T-cell (primary cell): ENCODE measurements at regions of chr11 and their contacts with region 1.

Region 1: GRCh38 chr11:35138943-35139721 is at the start of gene CD44:
- DNase-seq: peak; percentile 53 to 88 (median 76)
- ATAC-seq: peak; percentile 78 to 88 (median 86)
- H3K4me3 ChIP-seq: peak within 1 kb of the TSS; percentile 85 to 99
- H3K4me3 Mint-ChIP-seq: peak within 1 kb of the TSS; percentile 91 to 98 (median 98)
- H3K27ac ChIP-seq: peak within 1 kb of the TSS; percentile 91
- H3K27ac Mint-ChIP-seq: peak within 1 kb of the TSS; percentile 97 to 98
- H3K4me1 ChIP-seq: peaks cover 30 to 38% of the 10 kb centered on the region in 2 experiments
- H3K4me1 Mint-ChIP-seq: peaks cover 48 to 63% (median 52%) of the 10 kb centered on the region in 3 donors
- H3K27me3 ChIP-seq: no peaks in the 10 kb centered on the region
- H3K27me3 Mint-ChIP-seq: no peaks in the 10 kb centered on the region
- total RNA-seq, gene CD44: 732 to 1,108 (median 781) TPM

Region 2: DNA sequence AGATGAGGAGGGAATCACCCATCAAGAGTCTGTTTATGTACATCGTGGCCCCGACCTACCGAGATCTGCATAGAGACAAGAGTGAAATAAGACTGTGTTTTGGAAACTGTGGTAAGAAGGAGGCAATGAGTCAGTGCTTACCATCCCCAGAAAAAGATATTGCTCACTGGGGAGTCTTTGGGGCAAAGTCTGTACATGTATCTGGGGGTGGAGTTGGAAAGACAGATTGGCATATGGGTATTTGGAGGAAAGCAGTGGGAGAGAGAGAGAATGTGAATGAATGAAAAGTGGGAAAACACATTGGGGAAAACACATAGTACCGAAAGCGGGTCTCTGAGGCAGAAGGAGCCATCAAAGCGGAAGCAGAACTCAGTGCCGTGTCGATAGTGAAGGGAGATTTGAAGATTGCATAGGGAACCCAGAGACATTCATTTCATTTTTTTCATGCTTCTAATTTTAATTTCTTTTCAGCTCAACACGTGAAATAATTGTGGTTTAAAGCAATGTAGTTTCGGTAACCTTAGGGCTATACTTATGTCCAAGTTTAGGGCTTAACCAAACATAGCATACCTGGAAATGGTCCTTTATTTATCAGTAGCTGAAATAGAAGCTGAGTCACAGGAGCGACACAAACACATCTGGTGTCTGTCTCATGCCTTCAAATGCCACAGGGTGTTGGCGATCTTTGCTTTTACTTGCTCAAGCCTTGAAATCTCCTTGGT is 98.8 kb before region 1 on chr11:
- CTCF ChIA-PET with region 1: no interaction called
- POLR2A ChIA-PET with region 1: interaction called in 1 of 2 experiments, 31 read pairs
- DNase-seq: peak in 33 of 35 experiments; percentile 36 to 85 (median 50)
- ATAC-seq: peak; percentile 86 to 89 (median 88)
- H3K4me3 ChIP-seq: peak overlapping the region; percentile 51 to 53
- H3K4me3 Mint-ChIP-seq: peak overlapping the region; percentile 78 to 86 (median 80)
- H3K27ac ChIP-seq: peak overlapping the region; percentile 97
- H3K27ac Mint-ChIP-seq: peak overlapping the region; percentile 95 to 99
- H3K4me1 ChIP-seq: peaks cover 27 to 58% of the 10 kb centered on the region in 2 experiments
- H3K4me1 Mint-ChIP-seq: peaks cover 54 to 82% (median 69%) of the 10 kb centered on the region in 3 donors
- H3K27me3 ChIP-seq: no peaks in the 10 kb centered on the region
- H3K27me3 Mint-ChIP-seq: no peaks in the 10 kb centered on the region

Region 3: GRCh38 chr11:35047179-35047578 is 92.0 kb before region 1 on chr11:
- CTCF ChIA-PET with region 1: interaction called, 4 read pairs
- POLR2A ChIA-PET with region 1: interaction called, 3 to 32 read pairs
- DNase-seq: peak in 34 of 35 experiments; percentile 29 to 86 (median 58)
- ATAC-seq: peak; percentile 67 to 72 (median 70)
- H3K4me3 ChIP-seq: no peak overlapping the region
- H3K4me3 Mint-ChIP-seq: peak overlapping the region; percentile 1 to 77 (median 42)
- H3K27ac ChIP-seq: peak overlapping the region; percentile 98
- H3K27ac Mint-ChIP-seq: peak overlapping the region; percentile 93 to 95
- H3K4me1 ChIP-seq: peaks cover 59 to 85% of the 10 kb centered on the region in 2 experiments
- H3K4me1 Mint-ChIP-seq: peaks cover 95 to 97% (median 97%) of the 10 kb centered on the region in 3 donors
- H3K27me3 ChIP-seq: no peaks in the 10 kb centered on the region
- H3K27me3 Mint-ChIP-seq: no peaks in the 10 kb centered on the region

Region 4: GRCh38 chr11:35151241-35151640 is 12.1 kb after region 1 on chr11:
- CTCF ChIA-PET with region 1: interaction called in 1 of 2 experiments, 3 read pairs
- POLR2A ChIA-PET with region 1: interaction called, 4 to 13 read pairs
- DNase-seq: no peak
- ATAC-seq: no peak
- H3K4me3 ChIP-seq: no peak overlapping the region
- H3K4me3 Mint-ChIP-seq: peak overlapping the region; percentile 11 to 91 (median 53)
- H3K27ac ChIP-seq: peak overlapping the region; percentile 57
- H3K27ac Mint-ChIP-seq: peak overlapping the region; percentile 88 to 89
- H3K4me1 ChIP-seq: peaks cover 72 to 88% of the 10 kb centered on the region in 2 experiments
- H3K4me1 Mint-ChIP-seq: peaks cover 99 to 100% (median 100%) of the 10 kb centered on the region in 3 donors
- H3K27me3 ChIP-seq: no peaks in the 10 kb centered on the region
- H3K27me3 Mint-ChIP-seq: no peaks in the 10 kb centered on the region

Region 5: GRCh38 chr11:35158701-35159510 is 19.8 kb after region 1 on chr11:
- CTCF ChIA-PET with region 1: interaction called, 4 to 11 read pairs
- POLR2A ChIA-PET with region 1: interaction called, 7 to 110 read pairs
- DNase-seq: no peak
- ATAC-seq: no peak
- H3K4me3 ChIP-seq: no peak overlapping the region
- H3K4me3 Mint-ChIP-seq: peak overlapping the region; percentile 29 to 69 (median 61)
- H3K27ac ChIP-seq: peak overlapping the region; percentile 99
- H3K27ac Mint-ChIP-seq: peak overlapping the region; percentile 100
- H3K4me1 ChIP-seq: peaks cover 87 to 98% of the 10 kb centered on the region in 2 experiments
- H3K4me1 Mint-ChIP-seq: peaks cover 100% of the 10 kb centered on the region in 3 donors
- H3K27me3 ChIP-seq: no peaks in the 10 kb centered on the region
- H3K27me3 Mint-ChIP-seq: no peaks in the 10 kb centered on the region

Region 6: GRCh38 chr11:35173011-35173511 is 33.9 kb after region 1 on chr11:
- CTCF ChIA-PET with region 1: interaction called in 1 of 2 experiments, 3 read pairs
- POLR2A ChIA-PET with region 1: interaction called, 6 to 110 read pairs
- DNase-seq: no peak
- ATAC-seq: no peak
- H3K4me3 ChIP-seq: no peak overlapping the region
- H3K4me3 Mint-ChIP-seq: peak overlapping the region; percentile 55 to 69 (median 59)
- H3K27ac ChIP-seq: peak overlapping the region; percentile 99
- H3K27ac Mint-ChIP-seq: peak overlapping the region; percentile 100
- H3K4me1 ChIP-seq: peaks cover 76 to 95% of the 10 kb centered on the region in 2 experiments
- H3K4me1 Mint-ChIP-seq: peaks cover 95 to 97% (median 96%) of the 10 kb centered on the region in 3 donors
- H3K27me3 ChIP-seq: no peaks in the 10 kb centered on the region
- H3K27me3 Mint-ChIP-seq: no peaks in the 10 kb centered on the region